Calu3 (cell line): ENCODE measurements at regions of chr3 and their contacts with region 1.

Region 1: GRCh38 chr3:157088601-157089454 is 71.1 kb downstream of the CCNL1 start:
- DNase-seq: peak; percentile 100
- H3K4me3 Mint-ChIP-seq: peak overlapping the region; percentile 83
- H3K27ac Mint-ChIP-seq: peak overlapping the region; percentile 94
- H3K4me1 Mint-ChIP-seq: peaks cover 76% of the 10 kb centered on the region
- H3K27me3 Mint-ChIP-seq: no peaks in the 10 kb centered on the region
- CTCF ChIP-seq: peak; percentile 49

Region 2: GRCh38 chr3:156554842-156555687 is 533.8 kb before region 1 on chr3 and contains the start of gene SSR3:
- CTCF ChIA-PET with region 1: interaction called, 13 read pairs
- intact Hi-C with region 1: loop called (anchors 5 kb)
- DNase-seq: peak; percentile 100
- H3K4me3 Mint-ChIP-seq: peak within 1 kb of the TSS; percentile 87
- H3K27ac Mint-ChIP-seq: peak within 1 kb of the TSS; percentile 90
- H3K4me1 Mint-ChIP-seq: peaks cover 43% of the 10 kb centered on the region
- H3K27me3 Mint-ChIP-seq: no peaks in the 10 kb centered on the region
- CTCF ChIP-seq: peak; percentile 68
- total RNA-seq, gene SSR3: 287 and 312 TPM in 2 replicates

Region 3: GRCh38 chr3:156772581-156773206 is 316.1 kb before region 1 on chr3:
- CTCF ChIA-PET with region 1: no interaction called
- intact Hi-C with region 1: no loop called
- DNase-seq: peak; percentile 42
- H3K4me3 Mint-ChIP-seq: no peak overlapping the region
- H3K27ac Mint-ChIP-seq: no peak overlapping the region
- H3K4me1 Mint-ChIP-seq: peaks cover 8% of the 10 kb centered on the region
- H3K27me3 Mint-ChIP-seq: no peaks in the 10 kb centered on the region
- CTCF ChIP-seq: no peak

Region 4: GRCh38 chr3:156816800-156817645 is 271.8 kb before region 1 on chr3:
- CTCF ChIA-PET with region 1: interaction called, 6 read pairs
- intact Hi-C with region 1: loop called (anchors 2 kb)
- DNase-seq: peak; percentile 99
- H3K4me3 Mint-ChIP-seq: peak overlapping the region; percentile 94
- H3K27ac Mint-ChIP-seq: peak overlapping the region; percentile 96
- H3K4me1 Mint-ChIP-seq: peaks cover 64% of the 10 kb centered on the region
- H3K27me3 Mint-ChIP-seq: no peaks in the 10 kb centered on the region
- CTCF ChIP-seq: no peak

Region 5: DNA sequence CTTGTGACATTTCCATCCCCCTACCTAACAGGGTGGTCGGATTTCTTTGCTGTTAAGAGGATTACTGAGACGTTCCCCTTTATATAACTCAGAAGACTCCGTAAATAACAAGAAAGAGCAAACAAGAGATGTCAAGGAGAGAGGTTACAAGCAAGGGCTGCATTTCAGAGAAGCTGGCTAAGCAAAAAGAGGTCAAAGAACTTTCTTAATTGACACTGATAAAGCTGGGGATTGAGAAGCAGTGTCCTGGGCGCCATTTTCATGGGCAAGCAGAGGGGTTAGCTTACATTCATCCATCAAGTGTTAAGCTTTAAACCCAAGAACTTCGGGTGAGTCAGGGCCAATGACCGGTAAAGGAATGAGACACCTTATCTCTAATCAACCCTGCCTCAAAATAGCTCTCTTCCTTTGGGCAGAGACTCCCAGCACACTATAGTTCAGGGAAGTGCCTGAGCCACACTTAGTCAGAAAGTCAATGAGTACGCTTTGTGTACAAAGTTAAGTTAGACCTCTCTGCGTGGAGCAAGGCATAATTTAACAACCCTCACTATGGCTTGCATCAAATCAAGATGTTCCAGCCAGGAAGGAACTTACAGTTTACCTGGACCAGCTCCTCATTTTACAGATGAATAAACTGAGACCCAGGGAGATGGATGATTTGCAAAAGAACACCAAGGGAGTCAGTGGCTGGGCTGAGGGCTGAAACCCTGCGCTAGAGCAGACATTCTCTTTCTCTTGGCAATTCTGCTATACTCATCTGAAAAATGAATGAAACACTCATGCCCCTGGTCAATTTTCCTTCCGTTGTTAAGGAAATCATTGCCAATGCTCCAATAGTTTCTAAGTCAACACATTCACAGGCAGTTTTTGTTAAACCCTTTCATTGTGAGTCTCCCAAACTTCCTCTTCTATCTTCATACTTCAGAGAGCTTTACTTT is 26.5 kb after region 1 on chr3:
- CTCF ChIA-PET with region 1: interaction called, 22 read pairs
- intact Hi-C with region 1: no loop called
- DNase-seq: peak; percentile 43
- H3K4me3 Mint-ChIP-seq: no peak overlapping the region
- H3K27ac Mint-ChIP-seq: peak overlapping the region; percentile 61
- H3K4me1 Mint-ChIP-seq: peaks cover 52% of the 10 kb centered on the region
- H3K27me3 Mint-ChIP-seq: no peaks in the 10 kb centered on the region
- CTCF ChIP-seq: no peak

Region 6: DNA sequence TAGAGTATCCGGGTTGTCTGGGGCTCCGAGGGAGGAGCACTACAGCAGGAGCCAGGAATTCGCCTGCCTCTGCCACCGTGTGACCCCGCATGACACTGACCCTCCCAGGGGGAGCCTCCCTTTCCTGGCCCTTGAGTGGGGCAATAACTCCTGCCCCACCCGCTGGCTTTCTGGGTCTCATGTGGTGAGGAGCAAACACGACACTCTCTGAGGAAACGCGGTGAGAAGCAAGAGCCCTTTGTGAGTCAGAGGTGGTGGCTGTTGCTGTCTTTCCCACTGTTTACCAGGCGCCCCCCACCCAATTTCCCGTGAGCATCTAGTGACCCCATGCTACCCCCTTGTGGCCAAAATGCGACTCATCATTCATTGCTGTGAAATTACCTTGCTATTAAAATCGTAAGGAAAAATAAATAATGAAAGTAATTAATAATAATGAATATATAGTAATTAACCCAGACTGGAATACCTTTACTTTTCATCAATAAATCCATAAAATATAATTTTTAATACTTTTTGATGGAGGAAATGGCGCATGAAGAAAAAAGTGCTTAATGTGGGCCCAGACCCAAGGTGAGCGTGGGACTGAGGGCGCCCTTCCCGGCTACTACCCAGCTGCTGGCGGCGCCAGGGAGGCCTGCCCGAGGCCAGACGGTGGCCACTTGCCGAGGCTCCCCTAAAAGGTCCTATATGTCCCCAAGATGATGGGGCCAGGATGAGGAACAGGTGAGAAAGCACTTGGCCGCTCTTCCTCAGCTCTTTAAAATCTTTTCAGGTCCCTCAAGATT is 41.8 kb after region 1 on chr3:
- CTCF ChIA-PET with region 1: interaction called, 49 read pairs
- intact Hi-C with region 1: loop called (anchors 1 kb)
- DNase-seq: peak; percentile 97
- H3K4me3 Mint-ChIP-seq: peak overlapping the region; percentile 56
- H3K27ac Mint-ChIP-seq: peak overlapping the region; percentile 96
- H3K4me1 Mint-ChIP-seq: peaks cover 89% of the 10 kb centered on the region
- H3K27me3 Mint-ChIP-seq: no peaks in the 10 kb centered on the region
- CTCF ChIP-seq: peak; percentile 91